Transverse colon (tissue), 4 donors: ENCODE measurements at regions of chr3 and their contacts with region 1.

Region 1: DNA sequence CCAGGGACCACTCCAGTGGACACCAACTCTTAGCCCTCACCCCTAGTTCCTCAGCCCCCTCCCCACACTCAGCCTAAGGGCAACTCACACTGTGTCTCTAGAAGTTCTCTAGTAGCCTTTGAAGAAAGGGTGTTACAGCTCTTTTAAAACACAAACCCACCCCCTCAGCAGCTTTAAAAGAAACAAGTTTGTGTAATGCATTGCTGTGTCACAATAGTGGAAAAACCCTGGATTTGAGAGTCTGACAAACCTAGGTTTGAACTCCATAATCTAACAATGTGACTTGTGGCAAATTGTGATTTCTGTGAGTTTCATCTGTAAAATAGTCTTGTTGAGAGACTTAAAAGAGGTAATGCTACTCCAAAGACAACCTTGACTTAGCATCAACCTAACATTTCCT is 54.0 kb downstream of the PLCH1 start:
- DNase-seq: no peak
- H3K4me3 ChIP-seq: no peak overlapping the region
- H3K27ac ChIP-seq: no peak overlapping the region
- H3K4me1 ChIP-seq: no peaks in the 10 kb centered on the region
- H3K27me3 ChIP-seq: no peaks in the 10 kb centered on the region
- CTCF ChIP-seq: no peak
- EP300 ChIP-seq: no peak
- POLR2A ChIP-seq: no peak

Region 2: GRCh38 chr3:155382396-155383042 is 308.4 kb before region 1 on chr3:
- in situ Hi-C with region 1: loop called in 2 of 4 experiments (anchors 10 kb)
- intact Hi-C with region 1: no loop called
- DNase-seq: peak; percentile 76
- H3K4me3 ChIP-seq: no peak overlapping the region
- H3K27ac ChIP-seq: no peak overlapping the region
- H3K4me1 ChIP-seq: no peaks in the 10 kb centered on the region
- H3K27me3 ChIP-seq: no peaks in the 10 kb centered on the region
- CTCF ChIP-seq: peak; percentile 43 to 66 (median 63)
- EP300 ChIP-seq: no peak
- POLR2A ChIP-seq: no peak